Esophagus squamous epithelium (tissue), 5 donors: ENCODE measurements at regions of chr10 and their contacts with region 1.

Region 1: GRCh38 chr10:122446668-122447423 is 7.6 kb upstream of the ARMS2 start:
- DNase-seq: no peak
- H3K4me3 ChIP-seq: no peak overlapping the region
- H3K27ac ChIP-seq: peak overlapping the region in 1 of 4 donors; percentile 65
- H3K4me1 ChIP-seq: peaks cover 0 to 22% (median 4%) of the 10 kb centered on the region in 3 donors
- H3K27me3 ChIP-seq: no peaks in the 10 kb centered on the region
- CTCF ChIP-seq: no peak
- POLR2A ChIP-seq: no peak

Region 2: DNA sequence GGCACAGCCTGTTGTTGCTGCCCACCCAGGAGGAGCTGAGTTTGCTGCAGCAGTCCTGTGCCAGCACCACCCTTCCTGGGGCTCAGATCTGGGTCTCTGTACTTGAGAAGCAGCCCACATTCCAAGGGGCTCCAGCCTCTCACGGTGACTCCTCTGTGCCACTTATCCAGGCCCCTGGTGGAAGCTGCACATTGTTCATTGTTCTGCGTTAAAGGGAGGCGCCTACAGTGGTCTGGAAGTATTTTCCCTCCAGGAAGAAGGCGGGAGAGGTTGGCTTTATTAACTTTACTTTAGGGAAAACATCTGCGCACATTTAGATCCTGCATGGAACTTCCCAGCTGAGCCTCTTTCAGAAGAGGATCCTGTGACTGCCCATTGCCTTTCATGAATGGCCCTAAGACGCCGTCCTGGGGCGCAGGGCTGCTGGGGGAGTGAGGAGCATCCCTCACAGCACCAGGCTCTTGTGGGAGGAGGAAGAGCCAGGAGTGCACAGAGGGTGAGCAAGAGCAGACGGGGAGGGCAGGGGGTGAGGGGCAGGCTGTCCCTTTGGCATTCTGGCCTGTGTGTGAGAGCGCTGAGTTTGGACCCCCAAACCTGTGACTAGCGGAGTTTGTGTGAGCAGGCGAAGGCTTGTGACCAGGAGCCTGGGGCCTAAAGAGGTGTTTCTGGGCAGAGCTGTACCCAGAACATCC is 274.4 kb before region 1 on chr10:
- intact Hi-C with region 1: no loop called
- DNase-seq: no peak
- H3K4me3 ChIP-seq: no peak overlapping the region
- H3K27ac ChIP-seq: peak overlapping the region in 2 of 4 donors; percentile 40 to 56
- H3K4me1 ChIP-seq: peaks cover 3 to 36% (median 23%) of the 10 kb centered on the region in 3 donors
- H3K27me3 ChIP-seq: no peaks in the 10 kb centered on the region
- CTCF ChIP-seq: no peak
- POLR2A ChIP-seq: no peak

Region 3: DNA sequence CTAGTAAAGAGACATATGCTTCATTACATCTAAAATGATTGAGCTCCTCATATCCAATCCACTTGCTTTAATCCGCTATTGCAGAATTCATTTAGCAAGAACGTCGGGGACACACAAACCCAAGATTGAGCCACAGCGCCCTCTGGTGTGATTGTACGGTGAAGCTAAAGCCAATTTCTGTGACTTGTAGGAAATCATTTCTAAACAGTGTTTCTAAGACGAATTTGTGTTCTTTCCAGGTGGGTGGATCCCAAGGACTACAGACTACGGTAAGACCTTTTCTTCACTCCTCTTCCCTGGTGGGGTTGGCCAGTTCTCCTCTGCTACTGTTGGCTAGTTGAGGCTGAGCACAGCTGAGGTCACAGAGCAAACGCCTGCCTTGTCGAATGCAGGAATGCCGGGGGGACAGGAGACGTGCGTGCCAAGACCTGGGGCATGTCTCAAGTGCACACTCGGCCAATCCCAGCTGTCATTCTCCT is 118.9 kb after region 1 on chr10:
- intact Hi-C with region 1: loop called (anchors 10 kb)
- DNase-seq: no peak
- H3K4me3 ChIP-seq: peak overlapping the region in 3 of 4 donors; percentile 26 to 49 (median 27)
- H3K27ac ChIP-seq: no peak overlapping the region
- H3K4me1 ChIP-seq: peaks cover 0 to 7% (median 0%) of the 10 kb centered on the region in 3 donors
- H3K27me3 ChIP-seq: peaks cover 0 to 41% (median 0%) of the 10 kb centered on the region in 4 donors
- CTCF ChIP-seq: peak; percentile 56 to 83 (median 82)
- POLR2A ChIP-seq: no peak